Sciatic nerve (tissue), 2 donors: ENCODE measurements at regions of chr11 and their contacts with region 1.

Region 1: DNA sequence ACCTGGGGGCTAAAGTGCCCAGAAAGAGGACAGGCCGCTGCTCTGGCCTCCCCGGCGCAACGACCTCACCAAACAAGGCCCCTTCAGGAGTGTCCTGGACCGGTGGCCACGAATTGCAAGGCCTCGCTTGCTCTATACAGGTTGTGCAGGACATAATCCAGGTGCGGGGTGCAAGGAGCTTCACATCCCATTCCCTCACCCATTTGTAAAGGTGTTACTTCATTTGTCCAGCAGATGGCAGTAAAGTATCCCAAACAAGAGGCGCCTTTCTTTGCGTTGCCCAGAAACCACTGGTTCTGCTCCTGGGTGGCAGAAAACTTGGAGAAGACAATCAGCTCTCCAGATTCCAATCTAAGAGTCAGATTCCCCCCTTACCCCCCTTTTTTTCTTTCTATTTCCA is 35.9 kb upstream of the PRDM11 start:
- DNase-seq: no peak
- ATAC-seq: peak; percentile 78

Region 2: GRCh38 chr11:45332276-45332934 is 221.8 kb after region 1 on chr11:
- intact Hi-C with region 1: loop called (anchors 2 kb)
- DNase-seq: no peak
- ATAC-seq: peak; percentile 66

Region 3: GRCh38 chr11:45638051-45638450 is 527.5 kb after region 1 on chr11:
- intact Hi-C with region 1: no loop called
- DNase-seq: no peak
- ATAC-seq: no peak

Region 4: DNA sequence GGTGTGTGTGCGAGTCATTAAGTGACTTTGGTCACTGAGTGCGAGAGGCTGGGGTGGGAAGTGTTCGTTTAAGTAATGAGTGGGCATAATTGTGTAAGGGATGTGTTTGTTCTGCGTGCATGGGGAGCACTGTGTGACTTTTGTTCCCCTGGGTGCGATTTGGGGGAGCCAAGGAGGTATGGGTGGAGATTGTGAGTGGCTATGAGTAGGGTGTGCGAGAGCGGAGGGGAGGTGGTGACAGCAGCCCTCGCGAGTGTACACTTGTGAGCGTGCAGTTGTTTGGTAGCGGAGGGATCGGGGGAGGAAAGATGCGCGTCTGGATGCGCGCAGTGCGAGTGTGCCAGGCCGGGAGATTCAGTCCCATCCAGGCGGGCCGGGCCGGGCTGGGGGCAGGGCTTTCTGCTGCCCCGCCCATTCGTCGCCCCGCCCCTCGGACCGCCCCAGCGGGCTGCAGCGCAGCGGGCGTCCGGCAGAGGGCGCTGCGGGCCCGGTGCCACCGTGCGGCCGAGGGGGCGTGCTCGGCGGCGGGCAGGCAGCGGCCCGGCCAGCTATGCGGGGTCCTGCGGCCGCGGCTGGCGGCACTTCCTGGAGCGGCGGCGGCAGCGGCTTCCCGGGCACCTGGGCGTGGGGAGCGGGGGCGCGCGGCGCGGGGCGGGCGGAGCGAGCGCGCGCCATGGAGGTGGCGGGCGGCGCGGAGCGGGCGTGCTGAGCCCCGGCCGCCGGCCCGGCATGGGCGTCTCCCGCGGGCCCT is 1236.5 kb after region 1 on chr11 and contains the start of gene DGKZ:
- intact Hi-C with region 1: no loop called
- DNase-seq: peak; percentile 89
- ATAC-seq: peak; percentile 90
- total RNA-seq, gene DGKZ: 45.5 TPM